Heart right ventricle (tissue), 16 donors: ENCODE measurements at regions of chr14 and their contacts with region 1.

Region 1: GRCh38 chr14:104895786-104896661 is 28.7 kb upstream of the PLD4 start:
- DNase-seq: peak in 1 of 2 donors; percentile 28
- ATAC-seq: peak in 5 of 8 donors; percentile 3 to 35 (median 14)
- H3K4me3 ChIP-seq: no peak overlapping the region
- H3K27ac ChIP-seq: no peak overlapping the region
- H3K4me1 ChIP-seq: peaks cover 5 to 30% (median 17%) of the 10 kb centered on the region in 9 donors
- H3K27me3 ChIP-seq: no peaks in the 10 kb centered on the region
- CTCF ChIP-seq: no peak

Region 2: GRCh38 chr14:102939820-102940561 is 1956.0 kb before region 1 on chr14:
- intact Hi-C with region 1: loop called in 1 of 10 experiments (anchors 5 kb)
- DNase-seq: no peak
- ATAC-seq: peak in 4 of 8 donors; percentile 4 to 22 (median 14)
- H3K4me3 ChIP-seq: no peak overlapping the region
- H3K27ac ChIP-seq: no peak overlapping the region
- H3K4me1 ChIP-seq: peaks cover 0 to 8% (median 3%) of the 10 kb centered on the region in 9 donors
- H3K27me3 ChIP-seq: no peaks in the 10 kb centered on the region
- CTCF ChIP-seq: no peak

Region 3: GRCh38 chr14:105045710-105046326 is 149.8 kb after region 1 on chr14:
- intact Hi-C with region 1: loop called in 8 of 10 experiments (anchors 1 to 10 kb)
- DNase-seq: peak; percentile 91 to 92
- ATAC-seq: peak; percentile 86 to 96 (median 93)
- H3K4me3 ChIP-seq: peak overlapping the region in 1 of 10 donors; percentile 15
- H3K27ac ChIP-seq: no peak overlapping the region
- H3K4me1 ChIP-seq: peaks cover 0 to 23% (median 0%) of the 10 kb centered on the region in 9 donors
- H3K27me3 ChIP-seq: peaks cover 0 to 26% (median 0%) of the 10 kb centered on the region in 7 donors
- CTCF ChIP-seq: peak in 8 of 9 donors; percentile 99 to 100 (median 100)

Region 4: DNA sequence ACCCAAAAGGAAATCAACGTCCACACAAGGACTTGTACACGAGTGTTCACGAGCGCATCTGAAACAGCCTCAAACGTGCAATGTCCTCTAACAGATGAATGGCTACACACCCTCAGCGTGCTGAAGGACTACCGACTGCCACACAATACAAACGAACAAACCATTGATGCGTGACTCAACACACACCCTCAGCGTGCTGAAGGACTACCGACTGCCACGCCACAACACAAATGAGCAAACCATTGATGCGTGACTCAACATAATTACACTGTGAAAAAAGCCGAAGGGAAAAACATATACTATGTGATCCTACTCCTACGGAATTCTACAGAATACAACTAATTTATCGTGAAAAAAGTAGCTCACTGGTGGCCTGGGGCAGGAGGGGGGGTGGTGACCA is 327.2 kb after region 1 on chr14:
- intact Hi-C with region 1: no loop called
- DNase-seq: no peak
- ATAC-seq: no peak
- H3K4me3 ChIP-seq: no peak overlapping the region
- H3K27ac ChIP-seq: no peak overlapping the region
- H3K4me1 ChIP-seq: peaks cover 0 to 19% (median 7%) of the 10 kb centered on the region in 9 donors
- H3K27me3 ChIP-seq: no peaks in the 10 kb centered on the region
- CTCF ChIP-seq: no peak

Region 5: DNA sequence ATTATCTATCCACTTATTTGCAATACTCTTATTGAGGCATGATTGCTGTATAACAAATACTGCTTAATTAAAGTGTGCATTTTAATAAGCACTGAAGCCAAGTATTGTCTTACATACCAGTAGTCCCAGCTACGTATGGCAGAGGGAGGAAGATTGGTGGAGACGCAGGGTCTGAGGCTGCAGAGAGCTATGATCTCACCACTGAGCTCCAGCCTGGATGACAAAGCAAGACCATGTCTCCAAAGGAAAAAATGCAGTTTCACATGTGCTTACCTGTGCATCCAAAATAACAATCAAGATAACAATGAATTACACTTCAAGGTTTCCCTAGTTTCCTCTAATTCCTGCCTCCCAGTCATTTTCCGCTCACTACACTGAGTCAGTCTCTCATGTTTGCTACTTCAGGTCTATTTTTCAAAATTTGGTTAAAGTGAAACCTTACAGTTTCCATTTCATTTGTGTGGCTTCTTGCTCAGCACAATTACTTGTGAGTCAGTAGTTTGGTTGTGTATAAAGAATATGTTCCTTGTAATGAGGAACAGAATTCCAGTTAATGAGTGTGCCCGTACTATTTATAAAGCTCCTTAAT is 1880.5 kb after region 1 on chr14:
- intact Hi-C with region 1: no loop called
- DNase-seq: no peak
- ATAC-seq: no peak
- H3K4me3 ChIP-seq: no peak overlapping the region
- H3K27ac ChIP-seq: no peak overlapping the region
- H3K4me1 ChIP-seq: no peaks in the 10 kb centered on the region
- H3K27me3 ChIP-seq: peaks cover 0 to 28% (median 7%) of the 10 kb centered on the region in 7 donors
- CTCF ChIP-seq: no peak